CD8-positive, alpha-beta T cell (primary cell): ENCODE measurements at regions of chr7 and their contacts with region 1.

Region 1: DNA sequence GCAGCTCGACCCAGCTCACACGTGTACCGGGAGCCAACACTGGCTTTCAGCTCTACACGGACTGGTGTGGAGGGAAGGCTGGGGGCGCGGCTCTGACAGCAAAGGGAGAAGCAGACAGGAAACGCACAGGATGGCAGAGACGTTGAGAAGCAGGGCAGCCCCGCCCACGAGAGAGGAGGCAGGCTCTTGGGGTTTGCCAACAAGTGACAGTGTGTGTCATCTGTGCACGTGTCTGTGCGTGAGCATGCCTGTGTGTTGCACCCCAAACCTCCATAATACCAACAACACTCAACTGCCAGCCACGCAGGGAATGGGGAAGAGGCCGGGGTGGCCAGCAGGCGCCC is 64.4 kb upstream of the PDGFA start:
- DNase-seq: peak; percentile 79 to 97 (median 91)
- ATAC-seq: peak; percentile 97
- H3K4me3 ChIP-seq: peak overlapping the region; percentile 59 to 66
- H3K4me3 Mint-ChIP-seq: peak overlapping the region; percentile 90
- H3K27ac ChIP-seq: peak overlapping the region; percentile 74 to 75
- H3K27ac Mint-ChIP-seq: peak overlapping the region; percentile 99
- H3K4me1 ChIP-seq: peaks cover 21% of the 10 kb centered on the region
- H3K4me1 Mint-ChIP-seq: peaks cover 39% of the 10 kb centered on the region
- H3K27me3 ChIP-seq: no peaks in the 10 kb centered on the region
- H3K27me3 Mint-ChIP-seq: no peaks in the 10 kb centered on the region
- CTCF ChIP-seq: no peak

Region 2: DNA sequence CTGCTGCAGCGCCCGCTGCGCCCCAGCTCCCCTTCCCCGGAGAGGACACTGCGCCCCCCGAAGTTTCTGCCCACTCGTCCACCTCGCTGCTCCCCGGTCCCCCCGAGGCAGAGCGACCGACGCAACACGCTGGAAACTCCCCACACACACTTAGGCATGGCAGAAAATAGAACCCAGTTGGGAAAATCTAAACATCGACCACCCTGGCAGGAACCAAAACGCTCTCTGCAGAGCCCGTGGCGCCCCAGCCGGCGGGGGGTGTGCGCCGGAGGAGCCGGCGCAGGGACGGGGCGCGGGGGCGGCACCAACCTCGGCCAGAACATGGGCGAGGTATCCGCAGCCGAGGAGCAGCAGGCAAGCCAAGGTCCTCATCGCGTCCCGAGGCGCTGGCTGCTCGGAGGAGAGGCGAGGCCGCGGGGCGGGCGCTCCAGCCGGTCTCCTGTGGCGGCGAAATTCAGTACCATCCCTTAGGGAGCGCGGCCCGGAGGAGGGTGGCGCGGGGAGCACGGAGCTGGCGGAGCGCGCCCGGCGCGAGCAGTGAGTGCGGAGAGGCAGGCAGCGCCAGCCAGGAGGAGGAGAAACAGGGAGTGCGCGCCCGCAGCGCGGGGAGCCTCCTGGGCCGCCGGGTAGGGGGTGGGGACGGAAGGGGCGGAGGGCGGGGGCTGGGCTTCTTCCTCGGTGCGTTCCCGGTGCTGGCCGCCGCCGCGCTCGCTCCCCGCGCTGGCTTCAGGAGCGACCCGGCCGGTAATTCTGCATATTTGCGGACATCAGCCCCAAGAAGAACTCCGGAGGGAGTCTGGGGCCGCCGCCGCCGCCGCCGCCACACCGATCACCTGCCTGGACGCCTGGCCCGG is 65.2 kb before region 1 on chr7:
- CTCF ChIA-PET with region 1: interaction called, 3 read pairs
- POLR2A ChIA-PET with region 1: no interaction called
- intact Hi-C with region 1: loop called in 1 of 2 experiments (anchors 10 kb)
- DNase-seq: peak in 5 of 9 experiments; percentile 6 to 48 (median 26)
- ATAC-seq: peak; percentile 16
- H3K4me3 ChIP-seq: peak overlapping the region in 1 of 2 experiments; percentile 30
- H3K4me3 Mint-ChIP-seq: peak overlapping the region; percentile 79
- H3K27ac ChIP-seq: no peak overlapping the region
- H3K27ac Mint-ChIP-seq: peak overlapping the region; percentile 75
- H3K4me1 ChIP-seq: peaks cover 24% of the 10 kb centered on the region
- H3K4me1 Mint-ChIP-seq: peaks cover 21% of the 10 kb centered on the region
- H3K27me3 ChIP-seq: peaks cover 33 to 34% of the 10 kb centered on the region in 2 experiments
- H3K27me3 Mint-ChIP-seq: peaks cover 31% of the 10 kb centered on the region
- CTCF ChIP-seq: no peak

Region 3: DNA sequence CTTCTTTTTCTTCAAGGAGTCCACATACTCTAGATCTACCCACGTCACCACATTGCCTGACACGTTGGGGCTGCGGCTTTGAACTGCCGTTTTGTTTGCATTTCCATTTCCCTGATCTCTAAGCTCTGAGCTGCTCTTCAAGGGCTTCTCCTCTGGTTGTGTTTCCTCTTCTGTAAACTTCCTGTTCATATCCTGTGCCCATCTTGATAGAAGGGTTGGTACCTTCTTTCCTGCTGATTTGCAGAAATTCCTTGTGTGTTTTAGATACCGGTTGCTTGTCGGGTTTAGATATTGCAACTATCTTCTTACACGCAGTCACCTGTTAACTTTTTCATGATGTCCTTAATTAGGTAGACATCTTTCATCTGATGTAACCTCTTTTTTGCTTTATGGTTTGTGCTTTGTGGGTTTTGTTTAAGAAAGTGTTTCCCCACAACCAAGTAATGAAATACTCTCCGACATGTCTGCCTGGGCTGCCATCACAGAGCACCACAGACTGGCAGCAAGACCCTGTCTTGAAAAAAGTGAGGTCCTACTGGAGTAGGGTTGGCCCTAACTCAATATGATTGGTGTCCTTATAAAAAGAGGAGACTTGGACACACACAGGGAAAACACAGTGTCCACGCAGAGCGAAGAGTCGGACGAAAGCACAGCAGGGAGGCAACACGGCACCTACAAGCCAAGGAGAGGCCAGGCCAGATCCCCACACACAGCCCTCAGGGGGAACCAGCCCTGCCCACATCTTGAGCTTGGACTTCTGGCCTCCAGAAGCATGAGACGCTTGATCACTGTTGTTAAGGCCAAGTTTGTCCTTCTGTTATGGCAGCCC is 34.7 kb after region 1 on chr7:
- CTCF ChIA-PET with region 1: no interaction called
- POLR2A ChIA-PET with region 1: interaction called, 7 read pairs
- intact Hi-C with region 1: loop called (anchors 1 kb)
- DNase-seq: peak; percentile 51 to 95 (median 77)
- ATAC-seq: peak; percentile 76
- H3K4me3 ChIP-seq: peak overlapping the region; percentile 3 to 30
- H3K4me3 Mint-ChIP-seq: peak overlapping the region; percentile 88
- H3K27ac ChIP-seq: peak overlapping the region; percentile 85 to 92
- H3K27ac Mint-ChIP-seq: peak overlapping the region; percentile 100
- H3K4me1 ChIP-seq: peaks cover 53% of the 10 kb centered on the region
- H3K4me1 Mint-ChIP-seq: peaks cover 63% of the 10 kb centered on the region
- H3K27me3 ChIP-seq: no peaks in the 10 kb centered on the region
- H3K27me3 Mint-ChIP-seq: no peaks in the 10 kb centered on the region
- CTCF ChIP-seq: no peak

Region 4: GRCh38 chr7:712381-713138 is 128.5 kb after region 1 on chr7:
- CTCF ChIA-PET with region 1: no interaction called
- POLR2A ChIA-PET with region 1: no interaction called
- intact Hi-C with region 1: loop called in 1 of 2 experiments (anchors 5 kb)
- DNase-seq: peak in 3 of 9 experiments; percentile 20 to 52 (median 40)
- ATAC-seq: peak; percentile 88
- H3K4me3 ChIP-seq: peak overlapping the region in 1 of 2 experiments; percentile 23
- H3K4me3 Mint-ChIP-seq: peak overlapping the region; percentile 66
- H3K27ac ChIP-seq: no peak overlapping the region
- H3K27ac Mint-ChIP-seq: peak overlapping the region; percentile 55
- H3K4me1 ChIP-seq: peaks cover 17% of the 10 kb centered on the region
- H3K4me1 Mint-ChIP-seq: peaks cover 21% of the 10 kb centered on the region
- H3K27me3 ChIP-seq: peaks cover 0 to 5% of the 10 kb centered on the region in 2 experiments
- H3K27me3 Mint-ChIP-seq: no peaks in the 10 kb centered on the region
- CTCF ChIP-seq: no peak

Region 5: GRCh38 chr7:816300-816750 is 232.2 kb after region 1 on chr7:
- CTCF ChIA-PET with region 1: no interaction called
- POLR2A ChIA-PET with region 1: no interaction called
- intact Hi-C with region 1: loop called in 1 of 2 experiments (anchors 5 kb)
- DNase-seq: peak; percentile 93 to 98 (median 96)
- ATAC-seq: peak; percentile 94
- H3K4me3 ChIP-seq: peak overlapping the region; percentile 40 to 53
- H3K4me3 Mint-ChIP-seq: peak overlapping the region; percentile 61
- H3K27ac ChIP-seq: no peak overlapping the region
- H3K27ac Mint-ChIP-seq: no peak overlapping the region
- H3K4me1 ChIP-seq: peaks cover 34% of the 10 kb centered on the region
- H3K4me1 Mint-ChIP-seq: peaks cover 54% of the 10 kb centered on the region
- H3K27me3 ChIP-seq: no peaks in the 10 kb centered on the region
- H3K27me3 Mint-ChIP-seq: peaks cover 2% of the 10 kb centered on the region
- CTCF ChIP-seq: no peak

Region 6: DNA sequence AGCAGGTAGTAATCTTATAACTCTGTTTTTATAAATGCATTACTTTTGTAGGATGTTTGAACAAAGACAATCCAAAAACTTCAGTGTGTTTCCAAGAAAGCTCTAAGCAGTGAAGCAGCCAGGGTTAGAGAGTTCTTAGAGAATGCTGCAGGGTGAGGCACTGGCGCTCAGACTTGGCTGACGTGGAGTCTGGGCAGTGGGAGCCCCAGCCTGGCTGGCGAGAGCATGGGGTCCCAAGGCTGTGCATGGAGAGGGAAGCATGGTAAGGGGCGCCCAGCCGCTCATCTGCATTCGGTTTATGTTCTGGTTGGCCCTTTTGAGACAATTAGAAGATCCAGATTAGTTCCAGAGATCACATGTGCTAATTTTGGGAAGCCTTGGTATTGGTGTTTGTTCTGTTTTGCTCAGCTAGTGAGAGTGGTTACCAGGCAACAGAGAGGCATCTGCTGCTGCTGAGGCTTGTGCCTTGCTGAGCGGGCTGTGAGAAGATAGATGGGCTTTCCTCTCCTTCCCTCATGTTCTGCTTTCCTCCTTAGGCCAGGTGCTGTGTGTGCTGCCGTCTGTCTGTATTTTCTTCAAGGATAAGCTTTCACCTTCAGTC is 258.4 kb after region 1 on chr7:
- CTCF ChIA-PET with region 1: no interaction called
- POLR2A ChIA-PET with region 1: no interaction called
- intact Hi-C with region 1: no loop called
- DNase-seq: no peak
- ATAC-seq: no peak
- H3K4me3 ChIP-seq: no peak overlapping the region
- H3K4me3 Mint-ChIP-seq: no peak overlapping the region
- H3K27ac ChIP-seq: no peak overlapping the region
- H3K27ac Mint-ChIP-seq: no peak overlapping the region
- H3K4me1 ChIP-seq: no peaks in the 10 kb centered on the region
- H3K4me1 Mint-ChIP-seq: no peaks in the 10 kb centered on the region
- H3K27me3 ChIP-seq: no peaks in the 10 kb centered on the region
- H3K27me3 Mint-ChIP-seq: no peaks in the 10 kb centered on the region
- CTCF ChIP-seq: no peak